SK-N-SH (cell line): ENCODE measurements at regions of chr20 and their contacts with region 1.

Region 1: GRCh38 chr20:50085452-50086365 is 27.2 kb downstream of the UBE2V1 start:
- DNase-seq: peak; percentile 79
- H3K4me3 ChIP-seq: no peak overlapping the region; a peak in 1 of 4 replicates
- H3K27ac ChIP-seq: peak overlapping the region; percentile 50 to 73
- H3K4me1 ChIP-seq: peaks cover 15 to 21% of the 10 kb centered on the region in 2 experiments
- H3K27me3 ChIP-seq: no peaks in the 10 kb centered on the region
- CTCF ChIP-seq: peak; percentile 88
- EP300 ChIP-seq: no peak
- RAD21 ChIP-seq: peak; percentile 80

Region 2: DNA sequence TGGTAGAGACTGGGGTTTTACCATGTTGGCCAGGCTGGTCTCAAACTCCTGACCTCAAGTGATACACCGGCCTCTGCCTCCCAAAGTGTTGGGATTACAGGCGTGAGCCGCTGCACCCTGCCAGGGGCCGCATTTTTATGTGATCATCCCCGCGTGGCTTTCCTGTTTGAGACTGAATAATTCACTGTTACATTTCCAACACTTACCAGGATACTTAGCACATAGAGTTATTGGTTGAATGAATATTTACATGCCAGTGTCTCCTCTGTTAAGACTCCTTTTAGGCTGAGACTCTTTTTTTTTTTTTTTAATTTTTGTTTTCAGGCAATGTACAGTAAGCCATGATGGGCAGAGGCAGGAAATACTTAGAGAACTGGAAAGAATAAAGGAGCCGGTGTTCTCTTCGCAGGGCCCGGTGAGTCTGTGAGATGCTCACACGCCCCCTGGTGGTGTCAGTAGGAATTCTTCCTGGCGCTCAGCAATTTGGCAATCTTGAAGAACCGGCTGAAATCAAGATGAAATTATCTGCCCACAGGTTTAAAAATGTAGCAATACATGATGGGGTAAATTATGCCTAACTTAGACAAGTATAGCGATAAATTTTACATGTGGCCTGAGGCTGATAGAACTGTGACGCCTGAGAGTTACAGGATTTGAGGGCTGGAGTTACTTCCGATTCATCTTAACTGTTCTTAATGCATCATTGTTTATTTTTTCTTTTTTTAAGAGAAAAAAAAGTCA is 157.1 kb before region 1 on chr20:
- CTCF ChIA-PET with region 1: no interaction called
- POLR2A ChIA-PET with region 1: no interaction called
- DNase-seq: peak; percentile 83
- H3K4me3 ChIP-seq: peak overlapping the region in 1 of 2 experiments; percentile 28; a peak in 1 of 4 replicates
- H3K27ac ChIP-seq: peak overlapping the region in 1 of 2 experiments; percentile 48; a peak in 2 of 4 replicates
- H3K4me1 ChIP-seq: no peaks in the 10 kb centered on the region
- H3K27me3 ChIP-seq: no peaks in the 10 kb centered on the region
- CTCF ChIP-seq: peak; percentile 93
- EP300 ChIP-seq: no peak
- RAD21 ChIP-seq: peak; percentile 73

Region 3: GRCh38 chr20:49964964-49965780 is 120.5 kb before region 1 on chr20:
- CTCF ChIA-PET with region 1: interaction called, 24 read pairs
- POLR2A ChIA-PET with region 1: no interaction called
- DNase-seq: peak; percentile 78
- H3K4me3 ChIP-seq: no peak overlapping the region; a peak in 1 of 4 replicates
- H3K27ac ChIP-seq: no peak overlapping the region
- H3K4me1 ChIP-seq: peaks cover 0 to 2% of the 10 kb centered on the region in 2 experiments; a peak in 1 of 4 replicates
- H3K27me3 ChIP-seq: no peaks in the 10 kb centered on the region
- CTCF ChIP-seq: peak; percentile 72
- EP300 ChIP-seq: no peak
- RAD21 ChIP-seq: peak; percentile 29; the same call in 1 of the 2 replicates

Region 4: DNA sequence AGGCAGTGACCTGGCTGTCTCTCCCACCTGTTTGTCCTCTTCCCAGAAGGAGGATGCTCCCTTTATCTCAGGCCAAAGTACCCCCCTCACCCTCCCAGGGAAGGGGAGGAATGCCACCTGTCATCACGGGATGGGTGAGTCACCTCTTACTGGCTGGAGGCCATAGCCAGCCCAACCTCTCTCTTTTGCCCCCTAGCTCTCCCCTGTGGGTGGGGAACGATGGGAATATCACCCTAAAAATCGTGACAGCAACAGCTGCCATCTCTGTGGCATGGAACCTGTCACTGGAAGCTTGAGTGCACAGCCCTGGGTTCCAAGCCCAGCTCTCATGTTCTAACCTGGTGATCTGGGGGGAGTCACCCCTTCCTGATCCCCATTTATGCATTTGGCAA is 287.1 kb after region 1 on chr20:
- CTCF ChIA-PET with region 1: no interaction called
- POLR2A ChIA-PET with region 1: no interaction called
- DNase-seq: no peak
- H3K4me3 ChIP-seq: no peak overlapping the region
- H3K27ac ChIP-seq: no peak overlapping the region
- H3K4me1 ChIP-seq: peaks cover 6 to 8% of the 10 kb centered on the region in 2 experiments; a peak in 1 of 4 replicates
- H3K27me3 ChIP-seq: no peaks in the 10 kb centered on the region
- CTCF ChIP-seq: no peak
- EP300 ChIP-seq: no peak
- RAD21 ChIP-seq: no peak